PC-9 (cell line): ENCODE measurements at regions of chr19 and their contacts with region 1.

Region 1: DNA sequence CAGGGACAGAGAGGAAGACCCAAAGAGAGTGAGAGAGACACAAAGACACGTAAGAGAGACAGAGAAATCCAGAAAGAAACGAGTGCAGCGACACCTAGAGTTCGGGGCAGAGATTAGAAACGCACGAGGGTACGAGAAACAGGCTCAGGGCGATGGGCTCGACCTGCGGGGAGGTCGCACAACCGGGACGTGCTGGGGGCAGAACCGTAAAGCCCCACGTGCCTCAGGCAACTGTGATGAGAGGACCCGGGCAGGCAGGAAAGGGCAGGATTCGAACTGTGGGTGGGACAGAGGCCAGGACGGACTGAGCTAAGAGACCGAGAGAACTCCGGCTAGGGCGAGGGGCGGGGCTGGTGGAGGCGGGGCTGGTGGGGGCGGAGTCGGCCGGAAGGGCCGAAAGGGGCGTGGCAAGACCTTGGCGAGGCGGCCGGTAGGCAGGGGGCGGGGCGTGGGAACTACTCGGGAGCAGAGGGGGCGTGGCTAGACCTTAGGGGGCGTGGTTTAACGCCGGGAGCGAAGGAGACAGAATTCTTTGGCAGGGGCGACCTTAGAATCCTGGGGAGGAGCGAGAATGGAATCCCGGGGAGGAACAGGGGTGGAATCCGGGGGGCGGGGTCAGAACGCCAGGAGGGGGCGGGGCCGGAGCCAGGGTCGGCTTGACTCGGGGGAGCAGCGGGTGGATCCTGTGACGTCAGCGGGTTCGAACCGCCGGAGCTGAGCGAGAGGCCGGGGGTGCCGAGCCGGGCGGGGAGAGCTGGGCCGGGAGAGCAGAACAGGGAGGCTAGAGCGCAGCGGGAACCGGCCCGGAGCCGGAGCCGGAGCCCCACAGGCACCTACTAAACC is at the start of gene NECTIN2:
- DNase-seq: peak; percentile 93 to 100
- H3K4me3 ChIP-seq: peak within 1 kb of the TSS; percentile 83
- H3K27ac ChIP-seq: peak within 1 kb of the TSS; percentile 86
- H3K4me1 ChIP-seq: peaks cover 17% of the 10 kb centered on the region
- H3K27me3 ChIP-seq: no peaks in the 10 kb centered on the region
- CTCF ChIP-seq: peak; percentile 93
- total RNA-seq, gene NECTIN2: 115 and 136 TPM in 2 replicates

Region 2: DNA sequence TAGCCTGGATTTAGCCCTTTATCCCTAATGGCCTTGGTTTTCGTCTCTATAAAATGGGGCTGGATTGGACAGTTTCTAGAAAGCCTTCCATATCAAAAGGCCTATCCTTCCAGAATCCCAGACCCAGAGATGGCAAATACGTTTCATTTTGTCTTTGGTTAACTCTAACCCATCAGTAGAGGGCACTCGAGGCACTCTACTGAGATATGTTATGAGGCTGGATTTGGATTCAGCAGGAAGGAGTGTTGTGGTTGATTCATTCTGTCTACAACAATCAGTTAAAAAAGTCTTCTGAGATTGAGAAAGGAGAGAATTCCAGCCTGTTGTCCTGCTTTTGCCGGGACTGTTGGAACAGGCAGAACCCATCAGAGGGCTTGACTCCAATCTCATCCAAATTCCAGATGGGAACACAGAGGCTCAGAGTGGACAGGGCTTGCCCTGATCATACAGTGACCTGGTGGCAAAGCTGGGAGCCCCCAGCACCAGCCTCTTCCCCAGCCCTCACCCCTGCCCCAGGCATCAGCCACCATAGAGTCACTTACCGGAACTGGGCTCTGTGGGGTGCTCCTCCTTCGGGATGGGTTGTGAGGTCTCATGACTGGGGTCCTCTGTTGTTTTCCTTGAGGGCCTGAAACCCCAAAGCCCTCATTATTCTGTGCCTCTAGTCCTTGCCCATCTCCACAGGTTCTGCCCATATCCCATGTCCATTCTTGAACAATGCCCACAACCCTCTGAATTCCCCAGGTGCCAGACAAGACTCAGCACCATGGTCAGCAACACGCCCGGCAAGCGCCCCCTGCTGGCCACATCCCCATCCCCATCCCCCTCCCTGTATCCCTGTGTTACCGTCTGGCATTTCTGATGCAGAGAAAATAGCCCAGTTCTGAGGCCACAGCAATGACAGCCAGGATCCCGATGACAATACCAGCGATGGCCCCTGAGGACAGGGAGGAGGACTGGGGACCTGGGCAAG is 333.2 kb before region 1 on chr19:
- CTCF ChIA-PET with region 1: interaction called, 5 read pairs
- POLR2A ChIA-PET with region 1: no interaction called
- intact Hi-C with region 1: loop called (anchors 1 kb)
- DNase-seq: peak; percentile 50 to 73
- H3K4me3 ChIP-seq: no peak overlapping the region
- H3K27ac ChIP-seq: no peak overlapping the region
- H3K4me1 ChIP-seq: no peaks in the 10 kb centered on the region; the same call in 1 of the 2 replicates
- H3K27me3 ChIP-seq: peaks cover 10% of the 10 kb centered on the region; the same call in 1 of the 2 replicates
- CTCF ChIP-seq: peak; percentile 77

Region 3: DNA sequence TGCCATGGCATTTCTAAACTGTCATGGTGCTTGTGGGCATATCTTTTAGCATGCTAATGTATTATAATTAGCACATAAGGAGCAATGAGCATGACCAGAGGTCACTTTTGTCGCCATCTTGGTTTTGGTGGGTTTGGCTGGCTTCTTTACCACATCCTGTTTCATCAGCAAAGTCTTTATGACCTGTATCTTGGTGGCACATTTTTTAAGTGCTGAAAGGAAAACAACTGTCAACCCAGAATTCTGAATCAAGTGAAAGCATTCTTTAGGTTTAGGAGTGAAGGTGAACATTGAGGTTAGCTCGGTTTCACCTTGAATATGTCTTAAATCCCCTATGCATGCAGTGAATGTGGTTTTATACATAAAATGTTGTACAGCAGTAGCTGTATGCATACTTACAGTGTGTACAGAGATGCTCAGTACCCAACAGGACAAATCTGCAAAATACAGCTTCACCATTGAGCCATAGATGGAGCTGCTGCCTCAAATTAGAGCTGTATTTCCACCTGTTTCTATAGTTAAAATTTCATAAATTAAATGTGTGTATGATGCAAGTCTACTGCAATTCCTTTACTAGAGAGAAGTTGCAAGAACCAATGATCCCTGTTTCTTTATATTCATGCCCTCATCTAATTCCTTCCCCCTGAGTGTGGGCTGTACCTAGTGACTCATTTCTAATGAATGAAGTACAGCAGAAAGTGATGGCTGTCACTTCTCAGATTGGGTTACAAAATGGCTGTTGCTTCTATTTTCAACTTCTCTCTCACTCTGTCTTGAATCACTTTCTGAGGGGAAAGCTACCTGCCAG is 257.7 kb before region 1 on chr19:
- CTCF ChIA-PET with region 1: interaction called, 28 read pairs
- POLR2A ChIA-PET with region 1: interaction called, 4 read pairs
- intact Hi-C with region 1: loop called (anchors 5 kb)
- DNase-seq: peak; percentile 64 to 99
- H3K4me3 ChIP-seq: peak overlapping the region; percentile 28
- H3K27ac ChIP-seq: peak overlapping the region; percentile 98
- H3K4me1 ChIP-seq: peaks cover 82% of the 10 kb centered on the region
- H3K27me3 ChIP-seq: no peaks in the 10 kb centered on the region
- CTCF ChIP-seq: peak; percentile 75

Region 4: GRCh38 chr19:44677019-44677821 is 168.6 kb before region 1 on chr19:
- CTCF ChIA-PET with region 1: no interaction called
- POLR2A ChIA-PET with region 1: interaction called, 15 read pairs
- intact Hi-C with region 1: no loop called
- DNase-seq: peak; percentile 56 to 90
- H3K4me3 ChIP-seq: peak overlapping the region; percentile 19; the same call in 1 of the 2 replicates
- H3K27ac ChIP-seq: peak overlapping the region; percentile 73
- H3K4me1 ChIP-seq: peaks cover 25% of the 10 kb centered on the region
- H3K27me3 ChIP-seq: no peaks in the 10 kb centered on the region
- CTCF ChIP-seq: peak; percentile 57

Region 5: DNA sequence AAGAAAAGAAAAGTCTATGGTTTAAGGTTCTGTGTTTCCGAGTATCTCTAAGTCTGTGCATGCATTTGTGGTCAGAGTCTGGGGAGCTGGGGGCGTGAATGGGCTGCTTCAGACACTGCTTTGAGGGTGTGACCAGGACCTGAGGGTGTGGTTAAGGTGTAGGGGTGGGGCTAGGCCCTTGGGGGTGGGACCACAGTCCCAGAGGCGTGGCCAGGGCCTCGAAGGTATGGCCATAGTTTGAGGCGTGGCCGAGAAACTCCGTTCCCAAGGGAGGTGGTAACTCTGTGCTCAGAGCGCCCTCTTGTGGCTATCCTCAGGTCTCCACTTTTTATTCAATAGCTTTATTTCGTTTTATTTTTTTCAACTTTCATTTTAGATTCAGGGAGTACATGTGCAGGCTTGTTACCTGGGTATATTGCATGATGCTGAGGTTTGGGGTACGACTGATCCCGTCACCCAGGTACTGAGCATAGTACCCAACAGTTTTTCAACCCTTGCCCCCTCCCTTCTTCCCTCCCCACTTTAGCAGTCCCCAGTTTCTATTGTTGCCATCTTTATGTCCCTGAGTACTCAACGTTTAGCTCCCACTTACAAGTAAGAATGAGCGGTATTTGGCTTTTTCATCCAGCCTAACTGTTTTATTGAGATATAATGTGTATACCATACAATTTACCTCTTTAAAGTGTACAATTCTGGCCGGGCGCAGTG is 75.1 kb before region 1 on chr19:
- CTCF ChIA-PET with region 1: interaction called, 6 read pairs
- POLR2A ChIA-PET with region 1: interaction called, 9 read pairs
- intact Hi-C with region 1: loop called (anchors 2 kb)
- DNase-seq: peak; percentile 90 to 97
- H3K4me3 ChIP-seq: no peak overlapping the region
- H3K27ac ChIP-seq: peak overlapping the region; percentile 48
- H3K4me1 ChIP-seq: peaks cover 48% of the 10 kb centered on the region
- H3K27me3 ChIP-seq: no peaks in the 10 kb centered on the region
- CTCF ChIP-seq: peak; percentile 96

Region 6: DNA sequence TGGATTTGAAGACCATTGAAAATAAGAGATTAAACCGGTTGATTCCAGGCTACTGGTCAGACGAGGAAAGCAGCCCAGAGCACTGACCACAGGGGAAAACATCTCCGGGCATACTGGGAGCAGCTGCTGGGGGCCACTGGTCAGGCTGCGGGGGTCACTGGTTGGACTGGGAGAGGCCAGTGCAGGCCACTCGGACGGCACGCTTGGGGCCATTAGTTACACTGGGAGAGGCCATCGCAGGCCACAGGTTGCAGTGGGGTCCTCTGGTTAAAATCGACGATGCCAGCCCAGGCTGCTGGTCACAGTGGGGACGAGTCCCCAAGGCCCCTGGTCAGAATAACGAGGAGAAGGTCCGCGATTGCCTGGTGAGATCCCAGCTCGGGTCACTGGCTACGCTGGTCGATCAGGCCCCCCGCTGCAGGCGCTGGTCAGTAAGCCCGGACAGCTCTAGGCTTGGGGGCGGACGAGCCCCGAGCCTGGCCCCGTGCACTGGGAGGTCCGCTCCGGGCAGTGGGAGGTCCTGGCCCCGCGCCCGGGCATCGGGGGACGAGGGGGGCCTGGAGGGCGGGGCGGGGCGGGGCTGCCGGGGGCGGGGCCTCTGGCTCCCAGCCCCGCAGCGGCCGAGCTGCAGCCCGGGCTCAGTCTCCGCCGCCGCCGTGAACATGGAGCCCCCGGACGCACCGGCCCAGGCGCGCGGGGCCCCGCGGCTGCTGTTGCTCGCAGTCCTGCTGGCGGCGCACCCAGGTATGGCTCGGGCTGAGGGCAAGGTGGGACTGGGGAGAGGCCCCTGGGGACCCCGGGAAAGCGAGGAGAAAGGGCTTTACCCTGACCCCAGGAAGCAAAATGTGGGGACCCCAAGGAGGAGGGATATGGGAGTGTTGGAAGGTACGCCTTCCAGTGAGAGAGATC is 37.1 kb before region 1 on chr19 and contains the start of gene BCAM:
- CTCF ChIA-PET with region 1: interaction called, 6 read pairs
- POLR2A ChIA-PET with region 1: interaction called, 4 read pairs
- intact Hi-C with region 1: loop called (anchors 1 kb)
- DNase-seq: peak; percentile 55 to 88
- H3K4me3 ChIP-seq: peak within 1 kb of the TSS; percentile 95
- H3K27ac ChIP-seq: peak within 1 kb of the TSS; percentile 80
- H3K4me1 ChIP-seq: peaks cover 43% of the 10 kb centered on the region
- H3K27me3 ChIP-seq: no peaks in the 10 kb centered on the region
- CTCF ChIP-seq: no peak
- total RNA-seq, gene BCAM: 146 and 199 TPM in 2 replicates

Region 7: DNA sequence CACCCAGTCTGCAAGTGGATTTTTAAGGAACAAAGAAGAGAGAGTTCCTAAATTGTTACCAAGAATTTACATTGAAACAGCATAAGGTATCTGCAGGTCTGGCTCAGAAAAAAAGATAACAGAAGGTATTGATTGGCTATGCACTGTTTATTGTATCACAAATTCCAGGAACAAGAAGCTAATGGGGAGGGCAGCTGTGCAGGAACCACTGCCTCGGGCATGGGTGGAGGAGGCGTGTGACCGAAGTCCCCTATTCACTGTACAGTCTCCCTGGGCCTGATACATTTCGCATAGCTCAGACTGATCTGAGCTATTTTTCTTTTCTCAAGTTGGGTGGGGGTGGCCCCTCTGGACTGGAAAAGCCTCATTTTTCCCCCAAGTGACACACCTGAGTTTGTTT is 12.0 kb after region 1 on chr19:
- CTCF ChIA-PET with region 1: no interaction called
- POLR2A ChIA-PET with region 1: no interaction called
- intact Hi-C with region 1: no loop called
- DNase-seq: no peak
- H3K4me3 ChIP-seq: no peak overlapping the region
- H3K27ac ChIP-seq: no peak overlapping the region
- H3K4me1 ChIP-seq: no peaks in the 10 kb centered on the region
- H3K27me3 ChIP-seq: no peaks in the 10 kb centered on the region
- CTCF ChIP-seq: no peak

Region 8: GRCh38 chr19:44972802-44973201 is 127.0 kb after region 1 on chr19:
- CTCF ChIA-PET with region 1: no interaction called
- POLR2A ChIA-PET with region 1: no interaction called
- intact Hi-C with region 1: no loop called
- DNase-seq: no peak
- H3K4me3 ChIP-seq: no peak overlapping the region
- H3K27ac ChIP-seq: no peak overlapping the region
- H3K4me1 ChIP-seq: no peaks in the 10 kb centered on the region
- H3K27me3 ChIP-seq: no peaks in the 10 kb centered on the region
- CTCF ChIP-seq: no peak

Region 9: DNA sequence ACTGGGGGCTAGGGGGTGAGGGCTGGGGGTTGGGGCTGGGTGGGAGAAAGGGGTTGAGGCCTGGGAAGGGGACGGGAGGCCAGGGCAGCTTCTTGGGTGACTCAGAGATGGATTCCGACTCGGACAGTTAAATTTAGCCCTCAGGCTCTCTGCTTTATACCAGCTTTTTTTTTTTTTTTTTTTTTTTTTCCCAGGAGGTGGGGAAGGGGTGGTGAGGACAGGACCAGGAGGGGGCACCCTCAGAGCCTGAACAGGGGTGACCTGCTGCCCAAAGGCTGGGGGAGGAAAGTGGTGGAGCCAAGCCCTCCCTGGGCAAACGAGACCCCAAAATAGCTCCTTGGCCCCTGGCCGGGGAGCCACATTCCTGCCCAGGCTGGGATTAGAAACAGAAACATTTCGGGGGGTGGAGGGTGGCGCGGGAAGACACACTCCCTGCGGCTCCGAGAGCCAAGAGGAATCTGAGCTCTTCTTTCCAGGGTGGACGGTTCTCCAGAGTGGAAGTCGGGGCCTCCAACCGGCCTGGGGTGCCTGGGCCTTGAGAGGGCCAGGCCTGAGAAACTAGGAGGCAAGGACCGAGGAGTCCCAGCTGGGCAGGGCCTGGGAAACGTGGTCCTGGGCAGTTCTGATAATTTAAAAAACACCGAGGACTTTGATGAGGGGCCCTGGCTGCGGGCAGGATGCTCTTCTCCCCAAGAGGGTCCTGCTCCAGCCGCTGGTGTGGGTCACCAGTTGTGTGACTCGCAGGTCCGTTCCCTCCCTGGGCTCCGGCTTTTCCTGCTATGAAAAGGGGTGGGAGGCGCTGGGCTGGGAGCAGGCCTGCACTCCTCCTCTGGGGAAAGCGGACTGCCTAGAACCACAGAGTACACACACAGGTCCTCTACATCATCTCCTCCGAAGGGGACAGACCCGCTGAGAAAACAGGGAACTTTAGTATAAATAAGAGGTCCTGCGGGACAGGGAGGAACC is 937.3 kb after region 1 on chr19:
- CTCF ChIA-PET with region 1: no interaction called
- POLR2A ChIA-PET with region 1: interaction called, 20 read pairs
- intact Hi-C with region 1: no loop called
- DNase-seq: peak; percentile 73 to 77
- H3K4me3 ChIP-seq: peak overlapping the region; percentile 51; the same call in 1 of the 2 replicates
- H3K27ac ChIP-seq: peak overlapping the region; percentile 81
- H3K4me1 ChIP-seq: peaks cover 55% of the 10 kb centered on the region
- H3K27me3 ChIP-seq: no peaks in the 10 kb centered on the region
- CTCF ChIP-seq: no peak; the same call in 1 of the 2 replicates